Dorsolateral prefrontal cortex (tissue), 120 donors: ENCODE measurements at regions of chr22 and their contacts with region 1.

Region 1: DNA sequence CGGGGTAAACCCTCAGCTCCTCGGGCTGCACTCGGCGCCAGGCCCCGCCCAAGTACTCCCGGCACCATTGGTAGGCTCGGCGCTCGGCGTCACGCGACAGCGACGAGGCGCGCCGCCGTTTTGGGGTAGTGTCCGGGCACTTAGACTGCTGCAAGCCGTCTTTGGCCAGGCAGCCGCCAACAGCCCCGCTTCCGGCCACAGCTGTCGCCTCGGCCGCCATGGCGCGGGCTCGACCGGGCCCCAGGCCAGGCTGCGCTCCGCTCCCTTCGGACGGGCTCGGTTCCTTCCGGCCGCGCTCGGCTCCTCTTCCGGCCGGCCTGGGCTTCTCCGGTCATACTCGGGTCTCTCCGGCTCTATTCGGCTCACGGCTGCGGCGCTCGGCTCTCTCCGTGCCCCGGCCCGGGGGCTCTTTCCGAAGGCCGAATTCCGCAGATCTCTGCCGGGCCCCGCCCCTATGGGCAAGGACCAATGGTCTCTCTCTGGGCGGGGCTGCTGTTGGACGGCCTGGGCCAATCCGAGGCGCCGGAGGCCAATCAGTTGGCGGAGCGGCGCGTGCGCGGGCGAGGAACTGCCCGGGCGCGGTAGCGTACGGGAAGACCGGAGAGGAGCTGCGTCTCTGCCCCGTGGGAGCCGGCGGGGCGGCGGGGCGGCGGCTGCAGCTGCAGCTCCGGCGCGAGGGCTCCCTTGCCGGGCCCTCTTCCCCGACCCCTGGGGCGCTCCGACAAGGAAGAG is at the start of gene CHKB:
- DNase-seq: peak; percentile 97 to 100 (median 98)
- H3K4me3 ChIP-seq: peak within 1 kb of the TSS; percentile 55 to 99 (median 86)
- H3K27ac ChIP-seq: peak within 1 kb of the TSS; percentile 84 to 100 (median 98)
- H3K27me3 ChIP-seq: no peaks in the 10 kb centered on the region
- CTCF ChIP-seq: peak in 26 of 56 donors; percentile 6 to 61 (median 24)
- total RNA-seq, gene CHKB: 36.7 to 115 (median 63.9) TPM

Region 2: GRCh38 chr22:50562523-50563412 is 20.0 kb before region 1 on chr22 and contains the start of gene SYCE3:
- intact Hi-C with region 1: loop called in 1 of 2 experiments (anchors 1 kb)
- DNase-seq: peak; percentile 93 to 100 (median 97)
- H3K4me3 ChIP-seq: peak within 1 kb of the TSS; percentile 53 to 94 (median 77)
- H3K27ac ChIP-seq: peak within 1 kb of the TSS in 54 of 59 donors; percentile 15 to 90 (median 72)
- H3K27me3 ChIP-seq: no peaks in the 10 kb centered on the region
- CTCF ChIP-seq: peak; percentile 81 to 98 (median 94)
- total RNA-seq, gene SYCE3: 1.4 to 6.0 (median 2.0) TPM in 14 of 120 experiments, not detected in the others